Activated naive CD4-positive, alpha-beta T cell treated with anti-CD3 and anti-CD28 coated beads for 36 hours (primary cell): ENCODE measurements at regions of chr6 and their contacts with region 1.

Region 1: DNA sequence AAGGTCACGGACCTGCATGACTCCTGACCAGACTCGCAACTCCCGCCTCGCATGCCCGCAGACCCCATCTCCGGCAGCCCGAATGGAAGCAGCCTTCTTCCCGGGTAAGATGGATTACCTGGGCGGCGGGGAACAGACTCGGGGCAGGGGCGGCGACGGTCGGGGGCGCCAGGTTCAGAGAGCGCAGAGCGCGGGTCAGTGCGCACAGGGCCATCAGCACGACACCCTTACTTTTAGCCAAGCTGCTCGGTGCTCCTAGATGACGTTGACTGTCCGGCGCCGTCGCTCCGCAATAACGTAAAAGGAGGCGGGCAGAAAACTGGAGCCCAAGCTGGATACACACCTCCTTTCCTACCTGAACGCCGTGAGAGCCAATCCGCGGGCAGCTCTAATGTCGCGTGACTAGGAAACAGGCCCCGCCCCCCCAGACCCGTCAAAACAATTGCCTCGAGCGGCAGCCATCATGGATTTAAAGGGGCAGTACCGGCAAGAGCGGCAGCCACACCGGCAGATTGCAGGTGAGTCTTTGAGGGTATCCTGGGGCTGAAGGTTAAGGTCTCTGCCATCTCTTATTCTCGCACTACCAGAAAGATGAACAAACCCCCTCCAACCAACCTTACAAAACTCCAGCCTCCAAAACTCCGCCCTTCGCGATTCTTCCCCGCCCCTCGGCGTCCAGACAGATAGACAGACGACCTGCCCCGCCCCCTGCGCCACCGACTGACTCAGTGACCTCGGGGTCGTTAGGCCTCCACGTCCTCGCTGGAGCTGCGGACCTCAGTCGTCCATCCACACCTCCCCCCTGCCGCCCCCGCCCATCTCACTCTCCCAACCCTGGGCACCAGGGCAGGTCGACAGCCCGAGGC is at the starts of genes KLC4 and MRPL2:
- DNase-seq: peak; percentile 99
- H3K4me3 Mint-ChIP-seq: peak within 1 kb of the TSS; percentile 86
- H3K27ac Mint-ChIP-seq: peak within 1 kb of the TSS; percentile 93
- H3K4me1 Mint-ChIP-seq: peaks cover 29% of the 10 kb centered on the region
- H3K27me3 Mint-ChIP-seq: no peaks in the 10 kb centered on the region
- total RNA-seq, gene KLC4: 12.0 to 12.3 TPM
- total RNA-seq, gene MRPL2: 87.7 to 95.1 TPM

Region 2: GRCh38 chr6:42901536-42901957 is 157.9 kb before region 1 on chr6:
- CTCF ChIA-PET with region 1: interaction called, 3 read pairs
- intact Hi-C with region 1: loop called (anchors 2 kb)
- DNase-seq: peak; percentile 83
- H3K4me3 Mint-ChIP-seq: no peak overlapping the region
- H3K27ac Mint-ChIP-seq: no peak overlapping the region
- H3K4me1 Mint-ChIP-seq: peaks cover 11% of the 10 kb centered on the region
- H3K27me3 Mint-ChIP-seq: no peaks in the 10 kb centered on the region

Region 3: DNA sequence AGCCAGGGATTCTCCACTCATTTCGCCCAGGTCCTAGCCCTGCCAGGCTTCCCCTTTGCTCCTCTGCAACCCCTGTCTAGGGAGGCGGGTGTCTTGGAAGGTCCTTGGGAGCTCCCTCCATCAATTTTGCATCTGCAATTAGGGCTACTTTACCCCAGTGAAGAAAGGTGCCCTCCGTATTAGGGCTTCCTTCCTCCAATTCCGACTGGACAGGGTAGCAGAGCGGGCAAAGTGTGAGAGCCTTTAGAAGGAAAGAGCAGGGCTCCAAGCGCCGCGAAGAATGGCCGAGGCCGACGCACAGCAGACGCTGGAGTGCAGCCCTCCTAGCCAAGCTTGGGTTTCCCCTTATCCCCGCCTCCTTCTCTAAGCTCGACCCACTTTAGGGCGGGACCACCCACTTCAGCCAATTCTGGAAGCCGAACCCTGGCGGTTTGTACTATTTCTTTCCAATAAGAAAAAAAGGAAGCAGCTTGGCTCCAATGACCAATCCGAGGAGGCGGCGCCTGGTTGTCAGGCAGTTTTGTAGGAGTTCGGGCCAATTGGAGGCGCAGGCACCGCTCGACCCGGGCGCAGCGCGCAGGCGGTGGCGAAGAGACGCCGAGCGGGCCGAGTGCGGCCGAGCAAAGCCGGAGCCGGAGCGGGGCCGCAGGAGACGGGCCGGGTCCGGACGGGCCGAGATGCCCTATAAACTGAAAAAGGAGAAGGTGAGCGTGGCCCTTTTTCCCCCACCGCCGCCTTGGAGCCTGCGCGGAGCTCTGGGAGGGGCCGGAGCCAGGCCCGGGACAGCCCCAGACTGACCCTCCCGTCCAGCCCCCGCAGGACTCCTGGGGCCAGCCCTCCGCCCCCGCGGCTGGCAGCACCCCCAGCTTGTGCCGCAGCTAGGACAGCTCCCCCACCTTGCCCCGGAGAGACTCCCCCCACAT is 75.1 kb before region 1 on chr6 and contains the start of gene PPP2R5D:
- CTCF ChIA-PET with region 1: no interaction called
- intact Hi-C with region 1: loop called (anchors 1 kb)
- DNase-seq: peak; percentile 99
- H3K4me3 Mint-ChIP-seq: peak within 1 kb of the TSS; percentile 93
- H3K27ac Mint-ChIP-seq: peak within 1 kb of the TSS; percentile 81
- H3K4me1 Mint-ChIP-seq: peaks cover 51% of the 10 kb centered on the region
- H3K27me3 Mint-ChIP-seq: no peaks in the 10 kb centered on the region
- total RNA-seq, gene PPP2R5D: 52.4 to 54.4 TPM

Region 4: GRCh38 chr6:43089874-43090558 is 30.6 kb after region 1 on chr6:
- CTCF ChIA-PET with region 1: no interaction called
- intact Hi-C with region 1: no loop called
- DNase-seq: no peak
- H3K4me3 Mint-ChIP-seq: no peak overlapping the region
- H3K27ac Mint-ChIP-seq: no peak overlapping the region
- H3K4me1 Mint-ChIP-seq: peaks cover 8% of the 10 kb centered on the region
- H3K27me3 Mint-ChIP-seq: no peaks in the 10 kb centered on the region

Region 5: GRCh38 chr6:43228951-43229802 is 169.8 kb after region 1 on chr6 and contains the start of gene DNPH1:
- CTCF ChIA-PET with region 1: no interaction called
- intact Hi-C with region 1: loop called (anchors 1 kb)
- DNase-seq: peak; percentile 79
- H3K4me3 Mint-ChIP-seq: peak within 1 kb of the TSS; percentile 90
- H3K27ac Mint-ChIP-seq: peak within 1 kb of the TSS; percentile 89
- H3K4me1 Mint-ChIP-seq: peaks cover 41% of the 10 kb centered on the region
- H3K27me3 Mint-ChIP-seq: no peaks in the 10 kb centered on the region
- total RNA-seq, gene DNPH1: 59.7 to 59.8 TPM